AG04449 (cell line): ENCODE measurements at regions of chr1 and their contacts with region 1.

Region 1: DNA sequence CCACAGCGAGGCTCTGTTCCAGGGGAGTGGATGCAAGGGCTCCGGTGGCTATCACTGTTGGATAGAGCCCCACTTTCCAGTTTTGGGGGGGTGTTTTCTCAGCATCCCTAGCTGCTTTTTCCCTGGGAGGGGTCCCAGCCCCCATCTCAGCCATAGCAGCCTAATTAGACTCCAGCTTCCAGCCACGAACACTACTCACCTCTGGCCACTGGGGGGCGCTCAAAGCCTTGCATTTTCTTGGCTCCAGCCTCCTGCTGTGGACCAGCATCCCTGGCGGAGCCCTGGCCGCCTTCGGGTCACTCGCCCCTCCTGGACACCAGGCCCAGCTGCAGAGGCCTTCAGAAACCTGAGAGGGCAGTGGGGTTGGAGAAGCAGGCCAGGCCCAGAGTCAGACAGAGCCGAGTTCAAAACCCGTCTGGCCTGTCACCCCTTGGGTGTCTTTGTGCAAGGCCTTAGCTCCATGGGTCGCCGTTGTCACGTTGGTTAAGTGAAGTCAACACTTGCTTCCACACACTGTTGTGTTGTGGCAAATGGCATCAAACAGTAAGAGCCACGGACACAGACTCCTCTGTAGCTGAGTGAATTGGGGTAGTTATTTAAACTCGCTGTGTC is 93.5 kb upstream of the ACTL8 start:
- DNase-seq: no peak
- H3K4me3 ChIP-seq: no peak overlapping the region
- CTCF ChIP-seq: peak; percentile 84

Region 2: GRCh38 chr1:17648457-17649145 is 13.1 kb before region 1 on chr1:
- CTCF ChIA-PET with region 1: interaction called, 65 read pairs
- POLR2A ChIA-PET with region 1: no interaction called
- DNase-seq: no peak
- H3K4me3 ChIP-seq: no peak overlapping the region
- CTCF ChIP-seq: no peak

Region 3: DNA sequence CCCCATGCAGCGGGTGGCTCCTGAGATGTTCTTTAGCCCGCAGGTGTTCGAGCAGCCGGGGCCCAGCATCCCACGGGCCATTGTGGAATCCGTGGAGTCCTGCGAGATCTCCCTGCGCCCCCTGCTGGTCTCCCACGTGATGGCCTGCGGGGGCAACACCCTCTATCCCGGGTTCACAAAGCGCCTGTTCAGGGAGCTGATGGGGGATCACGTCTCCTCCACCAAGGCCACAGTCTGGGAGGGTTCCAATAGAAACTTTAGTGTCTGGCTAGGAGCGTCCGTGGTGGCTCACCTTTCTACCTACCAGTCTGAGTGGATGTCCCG is 164.5 kb after region 1 on chr1:
- CTCF ChIA-PET with region 1: interaction called, 41 read pairs
- POLR2A ChIA-PET with region 1: no interaction called
- DNase-seq: no peak
- H3K4me3 ChIP-seq: no peak overlapping the region
- CTCF ChIP-seq: peak; percentile 83

Region 4: GRCh38 chr1:18032172-18032859 is 370.7 kb after region 1 on chr1:
- CTCF ChIA-PET with region 1: no interaction called
- POLR2A ChIA-PET with region 1: no interaction called
- DNase-seq: no peak
- H3K4me3 ChIP-seq: no peak overlapping the region
- CTCF ChIP-seq: no peak

Region 5: GRCh38 chr1:18100491-18101063 is 438.9 kb after region 1 on chr1:
- CTCF ChIA-PET with region 1: interaction called, 41 read pairs
- POLR2A ChIA-PET with region 1: no interaction called
- DNase-seq: no peak
- H3K4me3 ChIP-seq: no peak overlapping the region
- CTCF ChIP-seq: peak; percentile 74

Region 6: GRCh38 chr1:18581420-18581880 is 919.8 kb after region 1 on chr1:
- CTCF ChIA-PET with region 1: interaction called, 13 read pairs
- POLR2A ChIA-PET with region 1: no interaction called
- DNase-seq: no peak
- H3K4me3 ChIP-seq: no peak overlapping the region
- CTCF ChIP-seq: peak; percentile 79